ENCODE measurements at regions of chr5 and their contacts with region 1.

Region 1: GRCh38 chr5:142644640-142645361 is 41.1 kb downstream of the FGF1 start:
- DNase-seq: peak; percentile 99
- H3K4me3 ChIP-seq: no peak overlapping the region
- H3K27ac ChIP-seq: peak overlapping the region; percentile 74
- H3K4me1 ChIP-seq: peaks cover 22% of the 10 kb centered on the region
- H3K27me3 ChIP-seq: no peaks in the 10 kb centered on the region
- CTCF ChIP-seq: no peak

Region 2: DNA sequence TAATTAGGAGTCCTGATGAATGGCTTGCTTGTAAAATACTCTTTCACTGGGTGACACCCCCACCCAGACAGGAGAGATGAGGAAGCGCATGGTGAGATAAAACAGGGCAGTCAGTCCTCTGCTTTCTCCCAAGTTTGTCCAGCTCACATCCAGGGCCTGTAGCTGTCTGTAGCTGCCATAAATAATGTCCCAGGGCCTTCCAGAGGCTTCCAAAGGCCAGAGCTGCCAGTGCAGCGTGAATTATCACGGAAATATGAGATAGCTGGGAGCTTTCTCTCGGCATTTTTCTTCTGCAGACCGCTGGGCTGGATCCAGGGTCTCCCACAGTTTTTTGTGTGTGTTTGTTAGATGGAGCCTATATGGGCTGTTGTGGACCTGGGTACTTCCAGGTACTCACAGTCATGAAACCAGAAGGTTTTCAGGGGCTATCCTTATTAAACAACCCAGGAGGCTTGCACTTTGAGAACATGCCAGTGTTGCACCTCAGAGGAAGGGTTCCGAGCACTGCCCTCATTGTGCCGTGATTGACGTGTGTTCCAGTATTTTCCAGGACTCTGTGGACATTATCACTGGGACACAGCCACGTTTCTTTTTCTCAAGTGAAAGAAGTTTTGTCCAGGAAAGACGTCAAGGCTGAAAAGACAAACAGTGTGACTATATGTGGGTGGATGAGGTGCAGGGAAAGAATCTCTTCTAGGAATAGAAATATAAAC is 76.4 kb before region 1 on chr5:
- CTCF ChIA-PET with region 1: no interaction called
- dilution Hi-C with region 1: no loop called
- in situ Hi-C with region 1: no loop called
- intact Hi-C with region 1: no loop called
- DNase-seq: no peak
- H3K4me3 ChIP-seq: no peak overlapping the region
- H3K27ac ChIP-seq: peak overlapping the region; percentile 49
- H3K4me1 ChIP-seq: peaks cover 12% of the 10 kb centered on the region
- H3K27me3 ChIP-seq: no peaks in the 10 kb centered on the region
- CTCF ChIP-seq: no peak

Region 3: DNA sequence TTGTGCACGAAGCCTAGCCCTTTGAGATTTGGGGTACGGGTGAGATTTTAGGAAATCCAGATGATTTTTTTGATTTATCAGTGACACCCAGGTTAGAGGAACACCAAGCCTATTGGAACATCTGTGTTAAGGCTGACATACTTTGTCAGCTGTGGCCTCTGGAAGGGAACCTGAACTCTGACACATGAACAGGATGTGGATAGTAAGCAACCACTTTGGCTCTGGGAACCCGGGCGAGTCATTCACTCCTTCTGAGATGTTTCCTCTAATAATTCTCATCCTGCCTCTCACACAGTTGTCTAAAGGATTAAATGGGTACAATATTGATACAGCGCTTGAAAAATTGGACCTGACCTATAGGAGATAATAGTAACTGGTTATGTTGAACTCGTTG is 26.7 kb before region 1 on chr5:
- CTCF ChIA-PET with region 1: no interaction called
- dilution Hi-C with region 1: no loop called
- in situ Hi-C with region 1: no loop called
- intact Hi-C with region 1: loop called (anchors 1 kb)
- DNase-seq: peak; percentile 77
- H3K4me3 ChIP-seq: no peak overlapping the region
- H3K27ac ChIP-seq: no peak overlapping the region
- H3K4me1 ChIP-seq: peaks cover 47% of the 10 kb centered on the region
- H3K27me3 ChIP-seq: no peaks in the 10 kb centered on the region
- CTCF ChIP-seq: no peak

Region 4: DNA sequence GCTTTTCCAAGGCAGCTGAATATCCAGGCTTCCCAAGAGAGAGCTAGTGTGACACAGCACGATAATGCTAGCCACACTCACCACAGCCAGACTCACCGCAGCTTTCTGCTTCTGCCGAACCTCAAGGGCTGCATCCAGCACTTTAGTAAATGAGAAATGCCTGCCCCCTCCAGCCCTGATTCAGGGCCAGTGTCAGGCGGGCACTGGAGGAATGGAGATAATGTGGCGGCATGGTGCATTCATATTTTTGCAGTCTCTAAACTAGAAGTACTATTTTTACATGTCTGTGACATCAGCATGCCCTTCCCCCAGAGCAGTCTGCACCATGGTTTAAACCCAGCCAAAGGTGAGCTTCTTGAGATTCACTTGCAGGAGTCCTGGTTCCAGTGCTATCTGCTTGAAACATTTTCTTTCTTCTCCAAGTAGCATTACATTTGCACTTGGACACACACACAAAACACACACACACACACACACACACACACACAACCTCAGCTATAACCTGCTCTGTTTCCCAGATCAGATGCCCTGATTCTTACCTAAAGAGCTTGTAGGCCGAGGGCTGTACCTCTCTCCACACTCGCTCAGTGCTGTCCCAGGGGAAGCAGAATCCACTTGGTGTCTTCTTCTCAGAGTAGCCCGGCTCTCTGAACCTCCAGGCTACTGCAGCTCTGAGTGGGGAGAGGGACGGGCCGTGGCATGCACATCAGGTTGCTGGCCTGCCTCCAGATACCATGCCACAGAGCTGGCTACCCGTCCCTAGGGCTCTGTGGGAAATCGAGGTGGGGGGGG is 40.8 kb after region 1 on chr5 and contains the start of gene FGF1:
- CTCF ChIA-PET with region 1: no interaction called
- dilution Hi-C with region 1: no loop called
- in situ Hi-C with region 1: no loop called
- intact Hi-C with region 1: no loop called
- DNase-seq: peak; percentile 80
- H3K4me3 ChIP-seq: peak within 1 kb of the TSS; percentile 21 to 43 (median 40)
- H3K27ac ChIP-seq: peak within 1 kb of the TSS; percentile 77
- H3K4me1 ChIP-seq: peaks cover 65% of the 10 kb centered on the region
- H3K27me3 ChIP-seq: no peaks in the 10 kb centered on the region
- CTCF ChIP-seq: no peak
- total RNA-seq, gene FGF1: 7.9 to 22.5 TPM

Measured in mammary epithelial cell (primary cell).